Cardiac septum (tissue), 1 donor: ENCODE measurements at regions of chr11 and their contacts with region 1.

Region 1: DNA sequence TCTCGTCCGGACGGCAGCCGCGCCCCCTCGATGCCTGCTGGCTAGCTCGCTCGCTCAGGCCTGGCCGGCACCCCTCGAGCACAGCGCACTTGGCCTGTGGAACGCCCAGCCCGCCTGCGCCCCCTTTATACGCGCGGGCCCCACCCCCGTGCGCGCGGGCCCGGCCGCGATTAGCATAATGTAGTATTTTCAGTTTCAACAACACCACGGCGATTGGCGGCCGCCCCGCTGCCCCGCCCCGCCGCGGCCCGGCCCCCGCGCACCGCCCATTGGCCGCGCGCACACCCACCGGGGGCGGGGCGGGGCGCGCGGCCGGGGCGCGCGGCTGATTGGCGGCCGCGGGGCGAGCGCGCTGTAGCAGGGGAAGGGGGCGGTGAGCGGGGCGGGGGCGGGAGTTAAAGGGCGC is at the start of gene CDKN1C:
- DNase-seq: peak; percentile 93
- total RNA-seq, gene CDKN1C: 11.5 TPM

Region 2: GRCh38 chr11:2428322-2428795 is 457.3 kb before region 1 on chr11:
- intact Hi-C with region 1: loop called (anchors 2 kb)
- DNase-seq: peak; percentile 91

Region 3: DNA sequence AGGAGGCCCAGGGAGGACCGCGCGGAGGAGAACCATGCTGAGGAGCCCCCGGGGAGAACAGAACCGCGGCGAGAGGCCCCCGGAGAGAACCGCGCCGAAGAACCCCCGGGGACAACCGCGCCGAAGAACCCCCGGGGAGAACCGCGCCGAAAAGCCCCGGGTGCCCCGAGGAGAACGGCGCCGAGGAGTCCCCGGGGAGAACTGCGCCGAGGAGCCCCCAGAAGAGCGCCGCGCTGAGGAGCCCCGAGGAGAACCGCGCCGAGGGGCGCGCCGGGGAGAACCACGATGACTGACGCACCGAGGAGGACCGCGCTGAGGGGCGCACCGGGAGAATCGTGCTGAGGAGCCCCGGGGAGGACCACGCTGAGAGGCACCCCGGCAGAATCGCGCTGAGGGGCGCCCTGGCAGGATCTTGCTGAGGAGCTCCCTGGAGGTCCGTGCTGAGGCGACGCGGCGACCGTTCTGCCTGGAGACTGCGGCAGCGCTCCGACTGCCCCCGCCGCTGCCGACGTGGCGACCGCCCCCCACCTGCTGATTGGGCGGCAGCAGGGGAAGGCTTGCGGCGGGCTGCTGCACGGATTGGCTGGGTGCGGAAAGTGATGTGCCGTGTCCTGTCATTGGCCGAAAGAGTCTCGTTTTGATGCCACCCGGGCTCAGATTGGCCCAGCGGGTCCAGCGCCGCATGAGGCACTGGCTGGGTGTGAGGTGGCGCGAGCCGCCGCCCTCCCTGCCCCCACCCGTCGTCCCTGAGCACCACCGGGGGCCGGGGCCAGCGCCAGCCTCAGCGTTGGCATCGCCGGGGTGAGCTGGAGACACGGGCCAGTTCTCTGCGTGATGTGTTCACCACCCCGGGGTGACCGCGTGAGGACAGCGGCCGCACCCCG is 185.9 kb before region 1 on chr11 and contains the start of gene KCNQ1OT1:
- intact Hi-C with region 1: loop called (anchors 10 kb)
- DNase-seq: peak; percentile 95
- total RNA-seq, gene KCNQ1OT1: 0.57 TPM

Region 4: DNA sequence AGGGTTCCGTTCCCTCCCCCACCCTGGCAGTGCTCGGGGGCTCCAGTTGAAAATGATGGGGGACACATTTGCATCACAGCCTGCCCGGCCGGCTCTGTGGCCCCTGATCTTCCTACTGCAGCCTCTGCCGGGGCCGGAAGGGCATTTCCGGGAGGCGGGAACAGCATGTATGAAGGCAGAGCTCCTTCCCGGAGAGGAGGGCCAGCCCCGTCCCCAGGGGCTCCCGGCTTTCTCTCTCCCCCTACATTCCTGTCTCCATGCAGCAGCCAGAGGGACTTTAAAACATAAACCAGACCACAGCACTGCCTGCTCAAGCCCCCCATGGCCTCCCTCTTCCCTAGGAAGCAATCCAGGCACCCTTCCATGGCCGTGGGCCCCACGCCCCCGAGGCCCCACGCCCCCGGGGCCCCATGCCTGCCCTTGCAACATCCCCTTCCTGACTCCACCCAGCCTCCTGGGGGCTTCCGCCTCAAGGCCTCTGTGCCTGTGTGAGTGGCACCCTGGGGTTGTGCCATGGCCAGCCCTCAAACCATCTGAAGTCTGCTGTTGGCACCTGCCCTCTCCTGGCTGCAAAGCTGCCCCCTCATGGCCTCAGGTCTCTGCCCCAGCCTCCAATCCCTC is 73.2 kb before region 1 on chr11:
- intact Hi-C with region 1: loop called (anchors 5 kb)
- DNase-seq: no peak

Region 5: DNA sequence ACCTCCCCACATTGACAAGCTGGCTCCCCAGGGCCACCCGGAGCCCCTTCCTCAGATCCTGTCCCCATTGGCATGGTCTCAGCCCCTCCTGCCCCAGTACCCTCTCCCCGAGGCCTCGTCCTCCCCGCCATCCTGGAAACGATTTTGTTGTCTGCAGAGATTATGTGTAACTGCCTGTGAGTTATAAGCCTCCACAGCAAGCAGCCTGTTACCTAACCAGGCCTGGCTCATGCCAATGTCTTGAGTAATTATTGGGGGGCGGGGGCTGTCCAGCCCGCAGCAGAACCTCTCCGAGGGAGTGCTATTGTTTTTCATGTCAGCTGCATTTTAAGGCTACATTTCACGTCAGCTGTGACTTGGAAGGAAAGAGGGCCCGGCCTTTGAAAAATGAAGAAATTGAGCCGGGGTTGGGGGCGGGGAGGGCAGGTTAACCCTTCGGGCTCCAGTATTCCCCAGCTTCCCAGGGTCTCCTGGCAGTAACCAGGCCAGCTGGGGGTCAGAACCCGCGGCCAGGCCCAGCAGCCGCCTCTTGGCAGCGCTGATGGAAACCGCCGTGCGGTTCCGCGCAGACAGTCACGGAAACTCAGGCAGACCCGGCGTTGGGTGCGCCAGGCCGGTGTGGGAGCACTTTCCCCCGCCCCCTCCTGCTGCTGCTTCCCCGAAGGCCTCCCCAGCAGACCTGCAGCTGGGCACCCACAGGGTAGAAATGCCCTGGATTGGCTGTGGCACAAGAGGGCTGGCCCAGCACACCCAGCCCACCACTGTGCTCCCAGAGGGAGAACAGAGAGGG is 59.6 kb before region 1 on chr11:
- intact Hi-C with region 1: no loop called
- DNase-seq: no peak